Psoas muscle (tissue), 8 donors: ENCODE measurements at regions of chr1 and their contacts with region 1.

Region 1: DNA sequence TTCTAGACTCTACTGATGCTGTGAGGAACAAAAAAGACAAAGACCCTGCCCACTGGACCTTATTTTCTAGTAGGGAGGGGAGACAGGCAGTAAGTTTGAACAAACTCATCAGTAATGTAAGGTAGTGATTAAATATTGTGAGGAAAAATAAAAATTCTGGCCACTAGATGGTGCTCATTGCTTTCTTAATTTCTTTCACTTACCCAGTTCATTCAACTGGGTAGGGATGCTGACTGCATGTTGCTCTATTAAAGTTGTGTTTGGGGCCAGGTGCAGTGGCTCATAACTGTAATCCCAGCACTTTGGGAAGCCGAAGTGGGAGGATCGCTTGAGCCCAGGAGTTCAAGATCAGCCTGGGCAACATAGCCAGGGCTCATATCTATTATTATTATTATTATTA is 6.3 kb upstream of the KYAT3 start:
- DNase-seq: no peak
- ATAC-seq: peak; percentile 74 to 95 (median 86)
- H3K4me3 ChIP-seq: no peak overlapping the region
- H3K27ac ChIP-seq: no peak overlapping the region
- H3K4me1 ChIP-seq: no peaks in the 10 kb centered on the region
- H3K27me3 ChIP-seq: no peaks in the 10 kb centered on the region
- CTCF ChIP-seq: peak; percentile 68

Region 2: DNA sequence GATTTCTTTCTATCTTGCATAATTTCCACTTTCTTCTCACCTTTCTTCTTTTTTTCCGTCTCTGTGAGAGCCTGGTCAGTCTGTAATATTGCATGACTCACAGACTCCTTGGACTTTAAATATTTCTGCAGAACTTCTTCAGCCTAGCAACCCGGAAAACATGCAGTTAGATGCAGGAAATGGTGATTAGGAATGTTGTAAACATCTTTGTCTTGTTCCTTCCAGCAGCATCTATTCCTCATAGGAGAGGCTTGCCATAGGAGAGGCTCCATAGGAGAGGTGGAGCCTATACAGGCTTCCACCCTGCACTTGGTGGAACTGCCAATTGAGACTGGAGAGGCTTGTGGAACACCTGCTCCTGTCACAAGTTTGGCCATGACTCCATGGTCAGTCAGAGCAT is 263.9 kb after region 1 on chr1:
- intact Hi-C with region 1: loop called in 1 of 2 experiments (anchors 5 kb)
- DNase-seq: no peak
- ATAC-seq: no peak
- H3K4me3 ChIP-seq: peak overlapping the region; percentile 34
- H3K27ac ChIP-seq: no peak overlapping the region
- H3K4me1 ChIP-seq: peaks cover 23% of the 10 kb centered on the region
- H3K27me3 ChIP-seq: no peaks in the 10 kb centered on the region
- CTCF ChIP-seq: no peak

Region 3: GRCh38 chr1:89358287-89358893 is 359.7 kb after region 1 on chr1:
- intact Hi-C with region 1: loop called (anchors 2 kb)
- DNase-seq: peak; percentile 66 to 77
- ATAC-seq: peak; percentile 53 to 90 (median 78)
- H3K4me3 ChIP-seq: no peak overlapping the region
- H3K27ac ChIP-seq: no peak overlapping the region
- H3K4me1 ChIP-seq: no peaks in the 10 kb centered on the region
- H3K27me3 ChIP-seq: no peaks in the 10 kb centered on the region
- CTCF ChIP-seq: peak; percentile 82

Region 4: DNA sequence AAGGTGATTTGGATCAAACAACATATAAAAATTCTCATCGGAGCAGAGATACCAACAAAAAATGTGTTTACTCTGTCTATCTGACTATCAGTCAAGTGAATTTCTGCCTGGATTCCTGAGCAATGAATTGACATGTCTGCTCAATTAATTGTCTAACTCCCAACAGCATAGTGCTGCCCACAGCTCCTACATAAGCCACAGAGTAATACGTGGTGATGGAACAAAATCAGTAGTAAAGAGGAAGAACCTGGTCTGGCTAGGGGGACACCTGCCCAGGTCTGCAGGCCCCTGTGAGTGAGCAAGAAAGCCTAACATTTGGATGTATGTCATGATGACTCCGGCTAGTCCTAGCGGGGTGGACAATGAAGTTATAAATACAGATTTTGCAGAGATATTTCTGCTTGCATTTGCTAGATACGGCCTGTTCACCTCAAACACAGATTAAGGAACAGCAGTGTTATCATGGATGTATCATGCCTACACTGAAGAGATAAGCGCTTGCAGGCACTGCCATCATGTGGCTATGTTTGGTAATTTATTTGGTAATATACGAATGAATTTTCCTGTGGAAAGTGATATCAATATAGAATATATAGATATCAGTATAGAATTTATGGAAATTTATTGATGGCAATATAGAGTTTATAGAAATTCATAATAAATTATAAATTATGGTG is 456.3 kb after region 1 on chr1:
- intact Hi-C with region 1: loop called in 1 of 2 experiments (anchors 2 kb)
- DNase-seq: peak in 1 of 2 donors; percentile 18
- ATAC-seq: peak in 2 of 4 donors; percentile 40 to 75
- H3K4me3 ChIP-seq: no peak overlapping the region
- H3K27ac ChIP-seq: no peak overlapping the region
- H3K4me1 ChIP-seq: no peaks in the 10 kb centered on the region
- H3K27me3 ChIP-seq: no peaks in the 10 kb centered on the region
- CTCF ChIP-seq: peak; percentile 66